ENCODE measurements at regions of chr13 and their contacts with region 1.

Region 1: GRCh38 chr13:108322206-108322824 is 52.8 kb downstream of the TNFSF13B start:
- DNase-seq: no peak
- H3K4me3 Mint-ChIP-seq: no peak overlapping the region
- H3K27ac Mint-ChIP-seq: no peak overlapping the region
- H3K4me1 Mint-ChIP-seq: no peaks in the 10 kb centered on the region
- H3K27me3 Mint-ChIP-seq: peaks cover 15% of the 10 kb centered on the region

Region 2: GRCh38 chr13:108227651-108228272 is 94.6 kb before region 1 on chr13:
- intact Hi-C with region 1: loop called (anchors 1 kb)
- DNase-seq: no peak
- H3K4me3 Mint-ChIP-seq: no peak overlapping the region
- H3K27ac Mint-ChIP-seq: no peak overlapping the region
- H3K4me1 Mint-ChIP-seq: peaks cover 31% of the 10 kb centered on the region
- H3K27me3 Mint-ChIP-seq: no peaks in the 10 kb centered on the region

Region 3: GRCh38 chr13:108980237-108980636 is 657.9 kb after region 1 on chr13:
- intact Hi-C with region 1: no loop called
- DNase-seq: no peak
- H3K4me3 Mint-ChIP-seq: no peak overlapping the region
- H3K27ac Mint-ChIP-seq: no peak overlapping the region
- H3K4me1 Mint-ChIP-seq: no peaks in the 10 kb centered on the region
- H3K27me3 Mint-ChIP-seq: peaks cover 11% of the 10 kb centered on the region